Activated CD8-positive, alpha-beta T cell treated with anti-CD3 and anti-CD28 coated beads for 36 hours (primary cell): ENCODE measurements at regions of chr10 and their contacts with region 1.

Region 1: DNA sequence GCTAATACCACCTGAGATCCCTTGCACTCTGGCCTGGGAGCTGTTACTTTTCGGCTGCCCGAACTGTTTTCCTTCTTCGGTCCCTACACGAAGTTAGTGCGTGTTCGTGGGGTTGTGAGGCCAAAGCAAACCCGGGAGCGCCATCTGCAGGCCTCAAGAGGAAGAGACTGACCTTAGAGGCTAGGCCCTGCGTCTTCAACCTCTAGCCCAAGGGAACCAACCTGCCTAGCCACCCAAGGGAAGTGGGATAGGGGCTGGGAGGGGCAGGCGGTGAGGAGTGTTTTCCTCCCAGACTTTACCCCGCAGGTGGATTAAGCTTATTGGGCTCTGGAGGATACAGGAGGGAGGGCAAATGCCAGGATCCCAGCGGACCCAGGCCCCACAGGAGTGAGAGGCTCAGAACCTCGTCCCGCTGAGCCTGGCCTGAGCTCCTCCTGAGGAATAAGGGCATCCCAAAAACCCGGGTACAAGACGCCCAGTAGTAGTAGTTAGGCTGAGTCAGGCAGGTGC is 1.7 kb upstream of the PAX2 start:
- DNase-seq: peak; percentile 76
- ATAC-seq: peak; percentile 71
- H3K4me3 Mint-ChIP-seq: no peak overlapping the region
- H3K27ac Mint-ChIP-seq: no peak overlapping the region
- H3K4me1 Mint-ChIP-seq: peaks cover 29% of the 10 kb centered on the region
- H3K27me3 Mint-ChIP-seq: peaks cover 80% of the 10 kb centered on the region
- CTCF ChIP-seq: peak; percentile 74

Region 2: DNA sequence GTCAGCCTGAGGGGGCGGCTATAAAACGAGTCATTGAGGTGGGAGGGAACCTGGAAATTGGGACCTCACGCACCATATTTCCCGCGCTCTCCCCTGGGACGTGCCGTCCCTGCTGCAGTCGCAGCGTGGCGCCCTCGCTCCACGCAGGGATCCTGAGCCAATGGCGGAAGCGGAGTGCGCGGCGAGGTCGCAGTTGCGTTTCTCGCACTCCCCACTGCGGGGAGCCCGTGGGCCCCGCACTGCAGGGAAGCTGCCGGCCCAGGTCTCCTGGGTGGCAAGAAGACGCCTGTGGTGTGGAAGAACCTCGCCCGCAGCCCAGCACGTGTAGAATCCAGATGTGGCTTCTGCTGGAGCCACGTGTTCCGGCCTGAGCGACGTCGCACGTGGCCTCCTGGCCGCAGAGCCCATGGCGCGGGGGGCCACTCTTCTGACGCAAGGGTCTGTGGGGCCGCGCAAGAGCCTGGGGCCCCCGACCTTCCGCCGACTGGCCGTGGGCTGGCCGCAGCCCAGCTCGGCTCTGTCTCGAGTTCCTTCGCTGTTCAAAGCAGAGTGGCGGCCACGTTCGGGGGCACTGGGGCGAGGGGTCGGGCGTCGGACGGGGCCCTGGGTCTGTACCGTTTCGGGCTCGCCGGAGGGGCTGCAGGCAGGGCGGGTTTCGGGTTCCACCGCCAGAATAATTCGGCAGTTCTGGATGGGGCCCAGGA is 181.5 kb before region 1 on chr10:
- CTCF ChIA-PET with region 1: interaction called, 57 read pairs
- POLR2A ChIA-PET with region 1: no interaction called
- intact Hi-C with region 1: loop called (anchors 5 kb)
- DNase-seq: peak; percentile 83
- ATAC-seq: peak; percentile 97
- H3K4me3 Mint-ChIP-seq: no peak overlapping the region
- H3K27ac Mint-ChIP-seq: no peak overlapping the region
- H3K4me1 Mint-ChIP-seq: peaks cover 9% of the 10 kb centered on the region
- H3K27me3 Mint-ChIP-seq: peaks cover 35% of the 10 kb centered on the region
- CTCF ChIP-seq: peak; percentile 99

Region 3: DNA sequence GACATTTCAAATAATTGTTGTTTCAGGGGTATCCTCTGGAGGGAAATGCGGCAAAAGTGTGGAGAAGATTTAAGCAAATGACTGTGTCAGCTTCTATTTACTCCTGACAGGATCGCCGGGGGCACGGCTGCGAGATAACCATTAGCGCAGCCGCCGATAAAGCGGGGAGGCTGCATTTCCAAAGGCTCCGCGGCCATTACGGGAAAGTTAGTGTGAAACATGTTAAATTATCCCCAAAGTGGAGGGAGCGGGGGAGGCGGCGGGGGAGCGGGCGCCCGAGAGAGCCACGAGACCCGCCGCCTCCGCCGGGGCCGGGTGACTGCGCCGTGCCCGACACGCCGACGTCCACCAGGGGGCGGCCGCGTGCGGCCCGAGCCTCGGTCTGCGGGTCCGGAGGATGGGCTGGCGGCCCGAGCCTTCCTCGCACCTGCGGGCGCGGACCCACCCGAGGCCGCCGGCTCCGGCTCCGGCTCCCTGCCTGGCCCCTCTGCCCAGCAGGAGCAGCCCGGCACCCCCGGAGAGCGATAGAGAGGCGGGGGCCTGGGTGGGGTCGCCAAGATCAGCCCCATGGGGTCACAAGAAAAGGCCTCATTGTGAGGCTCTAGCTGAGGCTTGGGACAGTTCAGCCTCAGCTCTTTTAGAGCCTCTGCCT is 72.7 kb before region 1 on chr10:
- CTCF ChIA-PET with region 1: interaction called, 42 read pairs
- POLR2A ChIA-PET with region 1: no interaction called
- intact Hi-C with region 1: loop called (anchors 5 kb)
- DNase-seq: peak; percentile 67
- ATAC-seq: peak; percentile 94
- H3K4me3 Mint-ChIP-seq: no peak overlapping the region
- H3K27ac Mint-ChIP-seq: no peak overlapping the region
- H3K4me1 Mint-ChIP-seq: no peaks in the 10 kb centered on the region
- H3K27me3 Mint-ChIP-seq: peaks cover 59% of the 10 kb centered on the region
- CTCF ChIP-seq: peak; percentile 99

Region 4: DNA sequence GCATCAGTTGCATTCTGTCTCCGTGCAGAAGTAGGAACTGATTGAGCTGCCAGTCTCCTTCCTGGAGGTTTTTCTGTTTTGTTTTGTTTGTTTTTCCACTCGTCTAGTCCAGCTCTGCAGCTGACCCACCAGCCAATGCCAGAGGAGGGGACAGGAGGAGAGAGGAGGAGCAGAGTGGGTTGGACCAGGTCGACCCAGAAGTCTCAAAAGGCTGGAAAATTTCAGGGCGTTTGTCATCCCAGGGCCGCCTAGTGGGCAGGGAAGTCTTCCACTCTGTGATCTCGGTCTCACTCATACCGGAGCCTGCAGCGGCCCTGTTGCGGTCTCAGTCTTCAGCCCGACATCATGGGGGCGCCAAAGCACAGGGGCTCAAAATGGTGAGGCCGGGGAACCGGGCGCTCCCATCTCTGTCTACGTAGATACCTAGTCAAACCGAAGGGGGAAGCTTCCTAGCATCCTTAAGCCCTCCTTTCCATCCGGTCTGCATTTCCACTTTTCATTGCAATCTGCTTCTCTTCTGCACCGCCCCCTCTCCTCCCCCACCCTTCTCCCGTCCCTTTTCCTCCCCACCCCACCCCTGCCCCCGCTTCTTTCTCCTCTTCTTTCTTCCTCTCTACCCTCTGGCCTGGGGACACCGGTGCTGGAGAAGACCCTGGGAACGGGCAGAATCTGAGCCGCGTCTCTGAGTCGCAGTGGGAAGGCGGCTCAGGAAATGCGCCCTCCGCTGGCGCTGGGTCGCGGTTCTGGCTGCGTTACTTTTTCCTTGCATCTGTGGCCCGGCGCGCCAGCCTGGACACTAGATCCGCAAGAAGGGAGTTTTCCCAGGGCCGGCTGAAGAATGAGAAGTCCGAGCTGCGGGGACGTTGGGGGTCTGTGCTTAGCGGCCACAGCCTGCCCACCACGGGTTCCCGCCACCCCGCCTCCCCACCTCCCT is 14.5 kb before region 1 on chr10:
- CTCF ChIA-PET with region 1: interaction called, 14 read pairs
- POLR2A ChIA-PET with region 1: no interaction called
- intact Hi-C with region 1: no loop called
- DNase-seq: peak; percentile 68
- ATAC-seq: peak; percentile 63
- H3K4me3 Mint-ChIP-seq: peak overlapping the region; percentile 7
- H3K27ac Mint-ChIP-seq: no peak overlapping the region
- H3K4me1 Mint-ChIP-seq: peaks cover 24% of the 10 kb centered on the region
- H3K27me3 Mint-ChIP-seq: peaks cover 80% of the 10 kb centered on the region
- CTCF ChIP-seq: no peak

Region 5: GRCh38 chr10:100827819-100828737 is 84.4 kb after region 1 on chr10:
- CTCF ChIA-PET with region 1: interaction called, 12 read pairs
- POLR2A ChIA-PET with region 1: no interaction called
- intact Hi-C with region 1: no loop called
- DNase-seq: peak; percentile 56
- ATAC-seq: peak; percentile 62
- H3K4me3 Mint-ChIP-seq: peak overlapping the region; percentile 70
- H3K27ac Mint-ChIP-seq: no peak overlapping the region
- H3K4me1 Mint-ChIP-seq: peaks cover 19% of the 10 kb centered on the region
- H3K27me3 Mint-ChIP-seq: peaks cover 76% of the 10 kb centered on the region
- CTCF ChIP-seq: no peak